Activated CD8-positive, alpha-beta T cell treated with anti-CD3 and anti-CD28 coated beads, Interleukin-2, amount 10 ng/mL, durations not matched to agents 7 days and 5 days (primary cell): ENCODE measurements at regions of chr17 and their contacts with region 1.

Region 1: GRCh38 chr17:78176548-78177025 is 8.2 kb downstream of the SYNGR2 start:
- DNase-seq: peak; percentile 82
- ATAC-seq: peak; percentile 90
- H3K4me3 Mint-ChIP-seq: no peak overlapping the region
- H3K27ac Mint-ChIP-seq: no peak overlapping the region
- H3K4me1 Mint-ChIP-seq: peaks cover 65% of the 10 kb centered on the region
- H3K27me3 Mint-ChIP-seq: no peaks in the 10 kb centered on the region

Region 2: GRCh38 chr17:78082988-78083387 is 93.6 kb before region 1 on chr17:
- CTCF ChIA-PET with region 1: interaction called, 28 read pairs
- POLR2A ChIA-PET with region 1: interaction called, 3 read pairs
- DNase-seq: no peak
- ATAC-seq: no peak
- H3K4me3 Mint-ChIP-seq: no peak overlapping the region
- H3K27ac Mint-ChIP-seq: no peak overlapping the region
- H3K4me1 Mint-ChIP-seq: peaks cover 5% of the 10 kb centered on the region
- H3K27me3 Mint-ChIP-seq: no peaks in the 10 kb centered on the region

Region 3: GRCh38 chr17:78128551-78129350 is 47.8 kb before region 1 on chr17 and contains the start of gene TMC6:
- CTCF ChIA-PET with region 1: interaction called, 31 read pairs
- POLR2A ChIA-PET with region 1: interaction called, 4 read pairs
- DNase-seq: peak; percentile 81
- ATAC-seq: peak; percentile 16
- H3K4me3 Mint-ChIP-seq: peak within 1 kb of the TSS; percentile 99
- H3K27ac Mint-ChIP-seq: peak within 1 kb of the TSS; percentile 99
- H3K4me1 Mint-ChIP-seq: peaks cover 52% of the 10 kb centered on the region
- H3K27me3 Mint-ChIP-seq: no peaks in the 10 kb centered on the region
- total RNA-seq, gene TMC6: 407 to 476 TPM

Region 4: GRCh38 chr17:78133971-78134898 is 42.4 kb before region 1 on chr17:
- CTCF ChIA-PET with region 1: interaction called, 31 read pairs
- POLR2A ChIA-PET with region 1: interaction called, 3 read pairs
- DNase-seq: peak; percentile 90
- ATAC-seq: peak; percentile 12
- H3K4me3 Mint-ChIP-seq: peak overlapping the region; percentile 74
- H3K27ac Mint-ChIP-seq: peak overlapping the region; percentile 84
- H3K4me1 Mint-ChIP-seq: peaks cover 78% of the 10 kb centered on the region
- H3K27me3 Mint-ChIP-seq: no peaks in the 10 kb centered on the region

Region 5: GRCh38 chr17:78140169-78140976 is 36.2 kb before region 1 on chr17:
- CTCF ChIA-PET with region 1: interaction called, 17 read pairs
- POLR2A ChIA-PET with region 1: interaction called, 6 read pairs
- DNase-seq: peak; percentile 98
- ATAC-seq: peak; percentile 90
- H3K4me3 Mint-ChIP-seq: peak overlapping the region; percentile 43
- H3K27ac Mint-ChIP-seq: peak overlapping the region; percentile 89
- H3K4me1 Mint-ChIP-seq: peaks cover 69% of the 10 kb centered on the region
- H3K27me3 Mint-ChIP-seq: no peaks in the 10 kb centered on the region

Region 6: DNA sequence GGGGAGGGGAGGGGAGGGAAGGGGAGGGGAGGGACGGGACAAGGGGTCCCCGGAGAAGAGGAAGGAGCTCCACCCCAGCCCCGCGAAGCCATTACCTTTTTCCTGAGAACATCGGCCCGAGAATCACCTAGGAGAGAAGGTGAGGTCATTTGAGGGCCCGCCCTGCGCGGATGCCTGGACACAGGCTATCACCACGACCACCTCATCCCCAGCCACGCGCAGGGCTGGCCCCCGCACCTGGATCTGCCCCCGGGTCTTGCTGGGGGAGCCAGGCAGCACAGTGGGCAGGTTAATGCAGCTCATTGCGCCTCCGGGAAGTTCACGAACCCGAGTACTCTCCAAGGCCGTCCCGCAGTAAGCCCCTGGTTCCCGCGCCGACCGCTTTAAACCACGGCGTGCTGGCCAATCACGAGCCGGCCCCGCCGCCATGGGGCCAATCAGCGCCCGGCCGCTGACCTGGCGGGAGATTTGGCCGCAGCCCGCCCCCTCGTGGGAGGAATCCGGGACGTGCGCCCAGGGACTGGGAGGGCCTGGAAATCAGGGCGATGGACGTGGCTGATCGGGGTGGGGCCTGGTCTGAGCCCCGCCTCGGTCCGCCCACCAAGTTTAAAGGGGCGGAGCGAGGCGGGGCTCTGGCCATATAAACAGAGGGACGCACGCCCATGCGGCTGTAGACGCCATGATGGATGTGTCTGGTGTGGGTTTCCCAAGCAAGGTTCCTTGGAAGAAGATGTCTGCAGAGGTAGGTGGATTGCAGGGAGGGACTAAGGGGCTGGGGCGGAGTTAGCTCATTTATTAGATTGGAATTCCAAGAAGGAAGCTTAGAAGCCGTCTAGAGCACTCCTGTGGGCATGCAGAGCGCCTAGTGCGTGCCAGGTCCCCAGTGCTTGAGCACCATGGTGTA is 10.4 kb after region 1 on chr17 and contains the starts of genes AFMID and TK1:
- CTCF ChIA-PET with region 1: interaction called, 27 read pairs
- POLR2A ChIA-PET with region 1: interaction called, 5 read pairs
- DNase-seq: peak; percentile 95
- ATAC-seq: peak; percentile 96
- H3K4me3 Mint-ChIP-seq: peak within 1 kb of the TSS; percentile 80
- H3K27ac Mint-ChIP-seq: peak within 1 kb of the TSS; percentile 70
- H3K4me1 Mint-ChIP-seq: peaks cover 45% of the 10 kb centered on the region
- H3K27me3 Mint-ChIP-seq: no peaks in the 10 kb centered on the region
- total RNA-seq, gene AFMID: 17.7 to 20.7 TPM
- total RNA-seq, gene TK1: 139 to 142 TPM

Region 7: DNA sequence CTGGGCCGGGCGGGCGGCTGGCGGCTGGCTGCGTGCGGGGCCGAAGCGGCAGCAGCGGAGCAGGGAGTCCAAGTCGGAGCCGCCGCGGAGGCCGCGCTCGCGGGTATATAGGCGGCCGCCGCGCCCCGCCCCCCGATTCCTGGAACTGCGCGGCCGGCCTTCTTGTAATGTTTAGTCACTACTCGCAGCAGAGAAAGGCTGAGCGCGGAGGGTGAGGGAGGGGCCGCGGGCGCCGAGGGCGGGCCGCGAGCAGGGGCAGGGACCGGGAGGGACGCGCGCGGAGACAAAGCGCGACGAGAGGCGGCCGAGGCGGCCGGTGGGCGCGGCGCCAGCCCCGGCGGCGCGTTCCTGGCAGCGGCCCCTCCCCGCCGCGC is 183.4 kb after region 1 on chr17 and contains the start of gene SOCS3:
- CTCF ChIA-PET with region 1: no interaction called
- POLR2A ChIA-PET with region 1: no interaction called
- DNase-seq: peak; percentile 97
- ATAC-seq: peak; percentile 79
- H3K4me3 Mint-ChIP-seq: peak within 1 kb of the TSS; percentile 79
- H3K27ac Mint-ChIP-seq: peak within 1 kb of the TSS; percentile 89
- H3K4me1 Mint-ChIP-seq: peaks cover 52% of the 10 kb centered on the region
- H3K27me3 Mint-ChIP-seq: peaks cover 19% of the 10 kb centered on the region
- total RNA-seq, gene SOCS3: 9.1 TPM

Region 8: GRCh38 chr17:78412403-78412802 is 235.8 kb after region 1 on chr17:
- CTCF ChIA-PET with region 1: no interaction called
- POLR2A ChIA-PET with region 1: no interaction called
- DNase-seq: peak; percentile 59
- ATAC-seq: peak; percentile 17
- H3K4me3 Mint-ChIP-seq: peak overlapping the region; percentile 76
- H3K27ac Mint-ChIP-seq: peak overlapping the region; percentile 97
- H3K4me1 Mint-ChIP-seq: peaks cover 87% of the 10 kb centered on the region
- H3K27me3 Mint-ChIP-seq: no peaks in the 10 kb centered on the region